ENCODE measurements at regions of chr19 and their contacts with region 1.

Region 1: DNA sequence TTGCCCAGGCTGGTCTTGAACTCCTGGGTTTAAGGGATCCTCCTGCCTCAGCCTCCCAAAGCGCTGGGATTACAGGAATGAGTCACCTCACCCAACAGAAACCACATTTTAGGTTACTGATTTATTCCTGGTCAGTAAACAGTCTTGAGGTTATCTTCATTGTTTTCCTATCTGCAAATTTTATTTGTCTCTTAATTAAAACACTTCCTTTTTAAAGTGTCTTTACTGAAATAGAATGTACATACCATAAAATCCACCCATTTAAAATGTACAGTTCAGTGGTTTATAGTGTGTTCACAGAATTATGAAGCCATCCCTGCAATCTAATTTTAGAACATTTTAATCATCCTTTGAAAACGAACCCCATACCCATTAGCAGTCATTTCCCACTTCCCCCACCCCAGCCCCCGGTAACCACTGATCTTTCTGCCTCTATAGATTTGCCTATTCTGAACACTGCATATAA is 63.0 kb downstream of the MAP4K1 start:
- DNase-seq: no peak
- H3K4me3 ChIP-seq: no peak overlapping the region
- H3K27ac ChIP-seq: no peak overlapping the region
- H3K4me1 ChIP-seq: no peaks in the 10 kb centered on the region
- H3K27me3 ChIP-seq: no peaks in the 10 kb centered on the region
- CTCF ChIP-seq: no peak

Region 2: DNA sequence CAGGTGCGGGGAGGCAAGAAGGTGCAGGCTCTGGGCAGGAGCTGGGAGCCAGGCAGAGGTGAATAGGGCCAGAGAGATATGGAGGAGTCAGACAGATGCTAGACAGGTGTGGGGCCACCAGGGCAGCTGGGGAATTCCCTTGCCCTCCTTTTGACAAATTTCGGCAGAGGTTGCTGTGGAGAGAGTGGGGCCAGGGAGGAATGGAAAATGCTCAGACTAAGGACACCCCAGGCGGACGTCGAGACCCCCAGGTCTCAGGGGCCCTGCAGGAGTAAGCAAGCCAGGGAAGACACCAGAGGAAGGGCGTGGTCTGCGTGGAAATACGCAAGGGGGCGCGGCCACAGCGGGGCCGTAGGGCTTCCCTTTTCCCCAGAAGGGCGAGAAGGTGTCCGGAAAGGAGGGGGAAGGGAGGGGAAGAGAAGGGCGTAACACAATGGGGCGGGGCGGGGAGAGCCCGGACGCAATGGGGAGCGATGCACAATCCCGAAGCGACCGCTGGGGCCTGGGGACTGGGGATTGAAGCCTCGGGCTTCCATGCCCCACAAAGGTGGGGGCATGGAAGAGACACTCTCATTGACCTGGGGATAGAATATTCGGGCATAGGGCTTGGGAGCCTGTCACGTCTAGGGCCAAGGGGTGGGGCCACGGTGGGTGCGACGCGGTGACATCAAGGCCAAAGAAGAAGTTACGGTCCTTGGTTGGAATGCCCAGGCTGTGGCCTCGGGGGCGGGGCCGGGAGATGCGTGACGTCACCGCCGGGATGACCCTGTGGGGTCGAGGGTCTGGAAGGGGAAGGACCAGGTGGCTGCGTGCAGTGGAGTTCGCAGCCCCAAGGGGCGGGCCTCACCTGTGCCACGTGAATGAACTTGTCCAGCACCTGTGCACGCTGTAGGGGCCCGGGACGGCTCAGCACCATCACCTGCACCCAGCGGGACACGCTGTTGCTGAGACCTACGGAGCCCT is 136.9 kb before region 1 on chr19:
- CTCF ChIA-PET with region 1: no interaction called
- POLR2A ChIA-PET with region 1: no interaction called
- intact Hi-C with region 1: no loop called
- DNase-seq: peak; percentile 62
- H3K4me3 ChIP-seq: peak overlapping the region; percentile 39
- H3K27ac ChIP-seq: no peak overlapping the region
- H3K4me1 ChIP-seq: no peaks in the 10 kb centered on the region
- H3K27me3 ChIP-seq: no peaks in the 10 kb centered on the region
- CTCF ChIP-seq: no peak

Region 3: DNA sequence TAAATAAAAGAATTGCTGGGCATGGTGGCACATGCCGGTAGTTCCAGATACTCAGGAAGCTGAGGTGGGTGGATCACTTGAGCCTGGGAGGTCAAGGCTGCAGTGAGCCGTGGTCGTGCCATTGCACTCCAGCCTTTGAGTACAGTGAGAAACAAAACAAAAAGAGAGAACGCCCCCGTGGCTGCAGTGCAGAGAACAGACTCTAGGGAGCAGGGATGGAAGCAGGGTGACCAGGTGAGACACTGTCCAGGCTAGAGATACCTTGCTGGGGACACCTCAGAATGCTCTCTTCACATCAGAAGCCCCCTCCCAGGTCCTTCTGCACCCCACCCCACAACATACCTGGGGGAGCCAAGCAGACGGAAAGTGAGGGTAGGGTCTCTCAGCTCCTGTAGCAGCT is 38.2 kb after region 1 on chr19:
- CTCF ChIA-PET with region 1: no interaction called
- POLR2A ChIA-PET with region 1: interaction called, 11 read pairs
- intact Hi-C with region 1: no loop called
- DNase-seq: no peak
- H3K4me3 ChIP-seq: no peak overlapping the region
- H3K27ac ChIP-seq: no peak overlapping the region
- H3K4me1 ChIP-seq: no peaks in the 10 kb centered on the region
- H3K27me3 ChIP-seq: no peaks in the 10 kb centered on the region
- CTCF ChIP-seq: 0 out of 2 replicates have a peak, but pooled peaks have one; percentile 9

Measured in A673 (cell line).